Mammary epithelial cell (primary cell): ENCODE measurements at regions of chrX and their contacts with region 1.

Region 1: DNA sequence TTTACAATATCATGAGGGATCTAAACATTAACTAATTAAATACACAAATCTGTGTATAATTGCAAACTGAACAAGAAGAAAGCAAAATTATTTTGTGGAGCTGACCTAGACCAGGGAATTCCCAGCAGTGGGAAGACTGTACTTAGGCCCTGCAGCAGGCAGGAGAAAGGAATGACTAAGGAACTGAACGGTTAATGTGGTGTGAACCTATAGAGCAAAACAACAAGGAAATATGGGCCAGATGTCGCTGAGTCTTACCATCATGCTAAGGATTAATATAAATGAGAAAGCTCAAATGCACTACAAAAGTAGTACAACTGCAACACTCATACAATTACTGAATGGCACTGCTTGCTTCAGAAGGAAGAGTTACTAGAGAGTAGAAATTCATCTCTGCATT is 120.3 kb upstream of the ATXN3L start:
- DNase-seq: no peak
- H3K4me3 ChIP-seq: no peak overlapping the region
- H3K27ac ChIP-seq: no peak overlapping the region
- H3K4me1 ChIP-seq: no peaks in the 10 kb centered on the region
- H3K27me3 ChIP-seq: no peaks in the 10 kb centered on the region
- CTCF ChIP-seq: no peak

Region 2: DNA sequence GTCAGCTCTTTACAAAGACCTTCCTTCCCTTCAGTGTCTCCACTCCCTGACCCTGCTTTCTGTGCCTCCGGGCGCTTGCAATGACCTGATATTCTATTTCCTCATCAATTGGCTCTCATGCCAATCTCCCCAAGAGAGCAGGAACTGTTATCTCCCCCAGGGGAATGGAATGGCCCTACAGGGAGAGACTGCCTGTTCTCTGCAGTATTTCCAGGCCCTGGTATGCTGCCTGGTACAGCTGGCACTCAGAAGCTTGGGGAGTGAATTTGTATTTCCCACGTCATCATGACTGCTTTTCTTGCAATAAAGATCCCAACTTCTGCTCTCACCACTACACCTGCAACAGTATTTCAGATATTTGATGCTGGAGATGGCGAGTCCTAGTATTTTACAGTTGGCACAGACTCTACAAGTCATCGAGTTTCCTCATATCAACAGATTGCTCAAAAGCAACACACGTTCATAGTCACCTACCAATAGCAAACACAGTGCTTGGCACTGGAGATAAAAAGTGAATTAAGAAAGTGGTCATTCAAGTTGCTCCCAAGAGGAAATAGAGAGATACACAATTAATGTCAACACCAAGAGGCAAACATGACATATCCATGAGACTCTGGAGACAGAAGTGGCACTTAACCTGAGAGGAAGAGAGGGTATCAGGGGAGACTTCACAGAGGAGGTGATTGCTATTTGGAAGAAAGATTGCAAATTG is 38.7 kb after region 1 on chrX:
- CTCF ChIA-PET with region 1: no interaction called
- dilution Hi-C with region 1: loop called (anchors 5 kb)
- in situ Hi-C with region 1: no loop called
- intact Hi-C with region 1: no loop called
- DNase-seq: no peak
- H3K4me3 ChIP-seq: no peak overlapping the region
- H3K27ac ChIP-seq: no peak overlapping the region
- H3K4me1 ChIP-seq: no peaks in the 10 kb centered on the region
- H3K27me3 ChIP-seq: no peaks in the 10 kb centered on the region
- CTCF ChIP-seq: no peak

Region 3: GRCh38 chrX:13685126-13685763 is 245.1 kb after region 1 on chrX:
- CTCF ChIA-PET with region 1: no interaction called
- dilution Hi-C with region 1: no loop called
- in situ Hi-C with region 1: no loop called
- intact Hi-C with region 1: no loop called
- DNase-seq: peak; percentile 71
- H3K4me3 ChIP-seq: no peak overlapping the region
- H3K27ac ChIP-seq: peak overlapping the region; percentile 13
- H3K4me1 ChIP-seq: peaks cover 17% of the 10 kb centered on the region
- H3K27me3 ChIP-seq: no peaks in the 10 kb centered on the region
- CTCF ChIP-seq: no peak